ENCODE measurements at regions of chr3 and their contacts with region 1.

Region 1: GRCh38 chr3:142148792-142149672 is at the start of gene TFDP2:
- DNase-seq: peak; percentile 92
- ATAC-seq: peak; percentile 100
- H3K4me3 Mint-ChIP-seq: peak within 1 kb of the TSS; percentile 86
- H3K27ac Mint-ChIP-seq: peak within 1 kb of the TSS; percentile 89
- H3K4me1 Mint-ChIP-seq: peaks cover 26% of the 10 kb centered on the region
- H3K27me3 Mint-ChIP-seq: no peaks in the 10 kb centered on the region
- total RNA-seq, gene TFDP2: 23.3 to 40.7 TPM

Region 2: DNA sequence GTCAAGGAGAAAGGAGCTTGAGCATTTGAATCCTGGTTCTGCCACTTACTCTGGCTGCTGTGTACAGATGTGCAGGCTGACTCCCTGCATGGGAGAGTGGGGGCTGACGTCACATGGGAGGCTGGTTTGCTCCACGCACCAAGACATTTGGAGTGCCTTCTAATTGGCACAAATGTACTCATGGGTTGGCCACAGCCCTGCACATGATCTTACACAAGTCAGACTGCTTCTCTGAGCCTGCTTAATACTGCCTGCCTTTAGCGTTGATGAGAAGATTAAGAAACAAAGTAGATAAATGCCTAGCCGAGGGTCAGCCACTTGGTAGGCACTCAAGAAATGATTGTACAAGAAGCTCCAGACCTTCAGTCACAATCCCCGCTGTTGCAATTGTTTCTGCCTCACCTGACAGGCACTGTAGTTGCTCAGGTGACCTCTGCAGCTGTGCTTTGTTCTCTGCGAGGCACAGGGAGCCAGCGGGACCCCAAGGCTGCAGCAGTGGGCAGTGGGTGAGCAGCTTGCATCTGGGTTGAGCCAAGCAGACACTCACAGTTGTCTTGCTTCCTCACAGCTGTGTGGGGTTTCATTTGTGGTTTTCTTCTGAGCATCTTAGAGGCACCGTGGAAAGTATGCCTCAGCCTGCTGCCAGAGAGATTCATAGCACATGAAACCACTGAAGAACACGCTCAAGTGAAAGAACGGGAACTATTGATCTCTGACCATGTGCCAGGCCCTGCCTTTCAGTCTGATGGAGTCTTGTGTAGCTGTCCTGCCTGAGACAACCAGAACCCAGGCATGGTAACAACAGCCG is 352.7 kb before region 1 on chr3:
- CTCF ChIA-PET with region 1: no interaction called
- POLR2A ChIA-PET with region 1: no interaction called
- intact Hi-C with region 1: loop called in 1 of 2 experiments (anchors 5 kb)
- DNase-seq: peak; percentile 90
- ATAC-seq: peak; percentile 84
- H3K4me3 Mint-ChIP-seq: peak overlapping the region; percentile 77
- H3K27ac Mint-ChIP-seq: peak overlapping the region; percentile 97
- H3K4me1 Mint-ChIP-seq: peaks cover 52% of the 10 kb centered on the region
- H3K27me3 Mint-ChIP-seq: no peaks in the 10 kb centered on the region

Region 3: GRCh38 chr3:141959921-141960554 is 189.0 kb before region 1 on chr3:
- CTCF ChIA-PET with region 1: no interaction called
- POLR2A ChIA-PET with region 1: no interaction called
- intact Hi-C with region 1: loop called in 1 of 2 experiments (anchors 5 kb)
- DNase-seq: no peak
- ATAC-seq: no peak
- H3K4me3 Mint-ChIP-seq: no peak overlapping the region
- H3K27ac Mint-ChIP-seq: no peak overlapping the region
- H3K4me1 Mint-ChIP-seq: peaks cover 3% of the 10 kb centered on the region
- H3K27me3 Mint-ChIP-seq: no peaks in the 10 kb centered on the region

Region 4: DNA sequence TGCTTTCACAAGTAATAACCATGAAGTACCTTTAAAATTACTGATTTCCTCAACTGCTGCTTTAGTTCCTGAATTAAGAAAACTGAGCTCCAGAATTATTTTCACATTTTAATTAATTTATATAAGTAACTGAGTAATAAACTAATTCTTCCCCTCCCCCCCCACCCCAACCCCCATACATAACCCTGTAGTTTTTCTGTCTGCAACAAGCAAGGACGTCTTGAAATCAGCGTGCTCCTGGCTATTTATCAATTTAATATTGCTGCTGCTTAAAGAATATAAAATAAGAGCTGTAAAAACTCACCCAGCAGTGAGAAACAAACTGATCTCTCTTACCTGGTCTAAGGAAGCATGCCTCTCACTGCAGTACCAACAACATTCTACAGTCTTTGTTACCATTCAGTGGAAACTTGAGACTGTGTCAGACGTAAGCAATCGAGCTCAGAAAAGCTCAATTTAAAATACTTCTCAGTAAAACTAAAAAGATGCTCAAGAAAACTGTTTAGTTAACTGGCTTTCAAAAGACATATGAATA is 120.7 kb before region 1 on chr3:
- CTCF ChIA-PET with region 1: no interaction called
- POLR2A ChIA-PET with region 1: no interaction called
- intact Hi-C with region 1: loop called (anchors 5 to 10 kb)
- DNase-seq: peak; percentile 42
- ATAC-seq: peak; percentile 74
- H3K4me3 Mint-ChIP-seq: peak overlapping the region; percentile 83
- H3K27ac Mint-ChIP-seq: peak overlapping the region; percentile 84
- H3K4me1 Mint-ChIP-seq: peaks cover 32% of the 10 kb centered on the region
- H3K27me3 Mint-ChIP-seq: no peaks in the 10 kb centered on the region

Region 5: GRCh38 chr3:142046320-142047020 is 102.6 kb before region 1 on chr3:
- CTCF ChIA-PET with region 1: no interaction called
- POLR2A ChIA-PET with region 1: interaction called, 10 read pairs
- intact Hi-C with region 1: no loop called
- DNase-seq: no peak
- ATAC-seq: no peak
- H3K4me3 Mint-ChIP-seq: no peak overlapping the region
- H3K27ac Mint-ChIP-seq: no peak overlapping the region
- H3K4me1 Mint-ChIP-seq: no peaks in the 10 kb centered on the region
- H3K27me3 Mint-ChIP-seq: no peaks in the 10 kb centered on the region

Region 6: DNA sequence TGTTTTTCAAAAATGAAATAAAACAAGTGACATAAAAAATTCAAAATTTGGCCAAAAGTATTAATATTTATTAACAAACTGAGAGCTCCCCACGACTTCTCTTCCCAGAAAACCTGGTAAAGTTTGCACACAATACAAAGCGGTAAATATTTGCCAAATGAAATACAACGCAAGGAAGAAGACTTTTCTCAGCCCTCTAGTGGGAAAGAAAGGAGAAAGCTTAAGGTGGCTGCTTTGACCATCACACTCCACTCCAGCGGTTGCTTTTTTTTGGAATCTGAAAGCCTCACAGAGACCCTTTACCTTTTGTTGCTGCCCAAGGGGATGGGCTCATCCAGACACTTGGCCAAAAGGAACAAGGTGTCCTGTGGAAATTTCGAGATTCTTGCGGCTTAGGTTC is 77.5 kb after region 1 on chr3:
- CTCF ChIA-PET with region 1: no interaction called
- POLR2A ChIA-PET with region 1: no interaction called
- intact Hi-C with region 1: loop called in 1 of 2 experiments (anchors 1 kb)
- DNase-seq: no peak
- ATAC-seq: no peak
- H3K4me3 Mint-ChIP-seq: peak overlapping the region; percentile 82
- H3K27ac Mint-ChIP-seq: no peak overlapping the region
- H3K4me1 Mint-ChIP-seq: peaks cover 13% of the 10 kb centered on the region
- H3K27me3 Mint-ChIP-seq: no peaks in the 10 kb centered on the region

Measured in activated CD4-positive, alpha-beta T cell treated with anti-CD3 and anti-CD28 coated beads for 36 hours (primary cell).